ENCODE measurements at regions of chr4 and their contacts with region 1.

Region 1: GRCh38 chr4:15882675-15883086 is 55.9 kb downstream of the FGFBP1 start:
- DNase-seq: peak; percentile 90
- H3K4me3 Mint-ChIP-seq: no peak overlapping the region
- H3K27ac Mint-ChIP-seq: peak overlapping the region; percentile 35
- H3K4me1 Mint-ChIP-seq: peaks cover 5% of the 10 kb centered on the region
- H3K27me3 Mint-ChIP-seq: no peaks in the 10 kb centered on the region
- CTCF ChIP-seq: peak; percentile 88

Region 2: GRCh38 chr4:15784959-15785634 is 97.6 kb before region 1 on chr4:
- CTCF ChIA-PET with region 1: no interaction called
- POLR2A ChIA-PET with region 1: no interaction called
- intact Hi-C with region 1: no loop called
- DNase-seq: no peak
- H3K4me3 Mint-ChIP-seq: no peak overlapping the region
- H3K27ac Mint-ChIP-seq: no peak overlapping the region
- H3K4me1 Mint-ChIP-seq: peaks cover 9% of the 10 kb centered on the region
- H3K27me3 Mint-ChIP-seq: peaks cover 22% of the 10 kb centered on the region
- CTCF ChIP-seq: no peak

Region 3: DNA sequence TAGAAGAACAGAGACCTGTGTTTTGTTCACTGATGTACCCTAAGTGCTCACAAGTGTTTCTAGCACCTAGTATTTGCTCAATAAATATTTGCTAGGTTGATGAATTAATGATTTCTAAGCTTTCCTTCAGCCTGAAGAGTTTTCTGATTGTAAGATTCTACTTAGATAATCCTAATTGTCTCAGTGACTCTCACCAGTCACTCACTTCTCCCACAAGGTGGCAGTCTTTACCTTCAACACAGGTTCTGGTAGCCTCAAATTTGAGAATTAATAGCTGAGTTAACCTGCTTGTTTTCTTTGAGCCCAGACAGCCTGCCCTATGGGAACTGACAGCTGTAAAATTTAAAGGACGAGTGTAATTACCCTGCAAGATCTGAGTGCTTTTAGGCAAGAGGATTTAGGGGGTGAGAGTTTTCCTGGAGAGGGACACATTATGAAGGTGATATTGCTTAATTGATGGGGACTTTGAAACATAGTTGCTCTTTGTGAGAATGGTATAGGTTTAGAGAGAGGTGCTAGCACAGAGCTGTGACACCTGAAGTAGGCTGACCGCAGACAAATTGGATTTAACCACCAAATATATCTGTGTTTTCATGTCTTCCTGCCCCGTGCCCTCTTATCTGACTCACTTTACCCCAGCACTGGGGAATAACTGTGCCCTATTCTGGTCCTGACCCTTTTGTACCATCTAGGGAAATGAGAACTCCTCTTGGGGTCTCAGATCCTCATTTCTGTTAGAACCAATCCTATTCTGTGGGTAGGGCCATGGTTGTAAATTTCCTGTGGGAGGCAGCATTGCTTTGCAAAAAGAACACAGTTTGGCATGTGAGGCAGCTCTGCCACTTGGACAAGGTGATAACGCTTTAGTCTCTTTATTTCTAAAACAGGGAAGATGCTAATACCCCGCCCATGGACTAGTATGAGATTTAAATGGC is 76.8 kb before region 1 on chr4:
- CTCF ChIA-PET with region 1: interaction called, 134 read pairs
- POLR2A ChIA-PET with region 1: interaction called, 7 read pairs
- intact Hi-C with region 1: loop called (anchors 1 kb)
- DNase-seq: peak; percentile 80
- H3K4me3 Mint-ChIP-seq: no peak overlapping the region
- H3K27ac Mint-ChIP-seq: no peak overlapping the region
- H3K4me1 Mint-ChIP-seq: peaks cover 5% of the 10 kb centered on the region
- H3K27me3 Mint-ChIP-seq: peaks cover 43% of the 10 kb centered on the region
- CTCF ChIP-seq: peak; percentile 67

Region 4: GRCh38 chr4:15893962-15894361 is 11.3 kb after region 1 on chr4:
- CTCF ChIA-PET with region 1: interaction called, 33 read pairs
- POLR2A ChIA-PET with region 1: interaction called, 3 read pairs
- intact Hi-C with region 1: no loop called
- DNase-seq: peak; percentile 97
- H3K4me3 Mint-ChIP-seq: no peak overlapping the region
- H3K27ac Mint-ChIP-seq: peak overlapping the region; percentile 99
- H3K4me1 Mint-ChIP-seq: peaks cover 29% of the 10 kb centered on the region
- H3K27me3 Mint-ChIP-seq: no peaks in the 10 kb centered on the region
- CTCF ChIP-seq: no peak

Region 5: DNA sequence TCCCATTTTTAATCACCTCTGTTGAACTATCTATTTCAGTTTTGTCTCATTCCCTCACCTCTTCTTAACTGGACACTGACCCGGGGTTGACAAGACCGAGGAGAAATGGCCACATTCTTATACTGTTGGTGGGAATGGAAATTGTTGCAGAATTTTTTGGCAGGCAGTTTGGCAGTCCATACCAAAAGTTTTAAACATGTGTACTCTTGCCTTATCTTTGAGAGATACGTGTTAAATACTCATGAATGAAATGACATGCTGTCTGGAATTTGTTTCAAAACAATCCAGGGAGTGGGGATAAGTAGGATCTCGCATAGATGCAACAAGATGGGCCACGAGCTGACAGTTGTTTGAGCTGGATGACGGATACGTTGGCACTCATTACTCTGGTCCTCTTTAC is 43.8 kb after region 1 on chr4:
- CTCF ChIA-PET with region 1: interaction called, 11 read pairs
- POLR2A ChIA-PET with region 1: no interaction called
- intact Hi-C with region 1: loop called (anchors 1 kb)
- DNase-seq: no peak
- H3K4me3 Mint-ChIP-seq: no peak overlapping the region
- H3K27ac Mint-ChIP-seq: no peak overlapping the region
- H3K4me1 Mint-ChIP-seq: peaks cover 15% of the 10 kb centered on the region
- H3K27me3 Mint-ChIP-seq: no peaks in the 10 kb centered on the region
- CTCF ChIP-seq: no peak

Region 6: GRCh38 chr4:15956179-15956850 is 73.6 kb after region 1 on chr4:
- CTCF ChIA-PET with region 1: interaction called, 357 read pairs
- POLR2A ChIA-PET with region 1: interaction called, 27 read pairs
- intact Hi-C with region 1: loop called (anchors 1 kb)
- DNase-seq: peak; percentile 89
- H3K4me3 Mint-ChIP-seq: no peak overlapping the region
- H3K27ac Mint-ChIP-seq: no peak overlapping the region
- H3K4me1 Mint-ChIP-seq: peaks cover 10% of the 10 kb centered on the region
- H3K27me3 Mint-ChIP-seq: no peaks in the 10 kb centered on the region
- CTCF ChIP-seq: peak; percentile 92

Region 7: GRCh38 chr4:15976456-15977447 is 94.1 kb after region 1 on chr4:
- CTCF ChIA-PET with region 1: interaction called, 12 read pairs
- POLR2A ChIA-PET with region 1: no interaction called
- intact Hi-C with region 1: no loop called
- DNase-seq: no peak
- H3K4me3 Mint-ChIP-seq: no peak overlapping the region
- H3K27ac Mint-ChIP-seq: no peak overlapping the region
- H3K4me1 Mint-ChIP-seq: no peaks in the 10 kb centered on the region
- H3K27me3 Mint-ChIP-seq: peaks cover 28% of the 10 kb centered on the region
- CTCF ChIP-seq: no peak

Measured in MCF 10A (cell line).